ENCODE measurements at regions of chr1 and their contacts with region 1.

Region 1: DNA sequence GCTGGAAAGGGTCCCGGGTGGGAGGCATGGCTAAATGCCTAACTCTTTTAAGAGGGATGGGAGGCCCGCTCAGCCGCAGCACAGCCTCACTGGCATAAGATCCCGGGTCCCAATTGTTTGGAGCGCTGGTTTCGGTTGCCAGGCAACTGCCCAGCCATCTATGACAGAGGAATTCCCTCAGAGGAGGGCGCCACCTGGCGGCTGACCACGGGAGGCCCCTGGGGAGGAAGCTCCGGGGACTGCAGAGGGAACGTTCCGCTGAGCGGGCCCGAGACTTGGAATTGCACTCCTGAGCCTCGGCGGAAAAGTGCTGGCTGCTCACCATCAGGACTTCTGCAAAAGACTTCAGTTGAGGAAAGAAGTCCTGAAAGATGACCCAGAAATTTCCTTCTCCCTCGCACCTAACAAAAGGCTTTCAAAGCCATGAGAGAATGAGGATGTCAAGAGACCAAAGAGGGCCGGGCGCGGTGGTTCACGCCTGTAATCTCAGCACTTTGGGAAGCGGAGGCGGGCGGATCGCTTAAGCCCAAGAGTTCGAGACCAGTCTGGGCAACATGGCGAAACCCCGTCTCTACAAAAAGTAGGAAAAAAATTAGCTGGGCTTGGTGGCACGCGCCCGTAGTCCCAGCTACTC is 1.1 kb upstream of the ELAPOR1 start:
- DNase-seq: peak; percentile 96
- H3K4me3 ChIP-seq: peak overlapping the region; percentile 46 to 60 (median 46)
- H3K27ac ChIP-seq: peak overlapping the region in 2 of 4 donors; percentile 40 to 63
- H3K4me1 ChIP-seq: peaks cover 12 to 27% (median 25%) of the 10 kb centered on the region in 4 donors
- H3K27me3 ChIP-seq: peaks cover 0 to 40% (median 13%) of the 10 kb centered on the region in 4 donors
- CTCF ChIP-seq: peak in 2 of 3 experiments; percentile 88 to 96
- EP300 ChIP-seq: no peak
- POLR2A ChIP-seq: no peak

Region 2: DNA sequence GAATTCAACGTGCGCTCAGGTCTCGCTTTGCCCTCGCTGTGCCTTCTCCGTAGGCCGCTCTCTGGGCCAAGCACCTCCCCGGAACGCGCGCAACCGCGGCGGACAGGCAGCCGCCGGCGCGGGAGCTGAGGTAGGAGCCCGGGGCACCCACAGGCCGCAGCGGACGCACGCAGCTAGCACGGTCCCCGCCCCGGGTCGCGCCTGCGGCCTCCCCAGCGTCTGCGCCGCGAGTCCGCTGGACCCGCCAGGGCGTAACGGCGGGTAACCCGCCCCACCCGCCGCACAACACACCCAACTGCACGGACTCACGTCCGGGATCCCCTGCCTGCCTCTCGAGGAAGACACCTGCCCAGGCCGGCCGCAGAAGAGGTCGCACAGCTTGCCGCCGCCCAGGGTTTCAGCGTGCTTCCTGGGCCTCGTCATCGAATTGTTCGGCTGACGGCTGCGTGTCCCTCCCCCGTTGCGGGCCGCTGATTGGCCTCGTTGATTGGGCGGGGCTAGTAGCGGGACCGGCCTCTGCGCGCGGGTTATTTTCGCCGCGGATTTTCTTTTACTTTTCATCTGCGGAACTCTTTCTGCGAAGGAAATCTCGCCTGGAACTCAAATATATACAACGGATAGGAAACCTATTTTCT is 149.6 kb before region 1 on chr1 and contains the start of gene CLCC1:
- intact Hi-C with region 1: loop called (anchors 5 kb)
- DNase-seq: peak; percentile 99
- H3K4me3 ChIP-seq: peak within 1 kb of the TSS; percentile 69 to 88 (median 80)
- H3K27ac ChIP-seq: peak within 1 kb of the TSS; percentile 93 to 99 (median 96)
- H3K4me1 ChIP-seq: peaks cover 26 to 42% (median 34%) of the 10 kb centered on the region in 4 donors
- H3K27me3 ChIP-seq: no peaks in the 10 kb centered on the region
- CTCF ChIP-seq: peak in 1 of 3 experiments; percentile 8
- EP300 ChIP-seq: no peak
- POLR2A ChIP-seq: peak; percentile 74
- total RNA-seq, gene CLCC1: 16.6 to 32.4 (median 25.9) TPM